ENCODE measurements at regions of chr2 and their contacts with region 1.

Region 1: GRCh38 chr2:237122214-237122666 is 36.6 kb downstream of the COPS8 start:
- DNase-seq: peak; percentile 47 to 65
- ATAC-seq: peak; percentile 56 to 86 (median 74)
- H3K4me3 ChIP-seq: no peak overlapping the region
- H3K27ac ChIP-seq: no peak overlapping the region
- H3K4me1 ChIP-seq: peaks cover 0 to 17% (median 0%) of the 10 kb centered on the region in 9 donors
- H3K27me3 ChIP-seq: no peaks in the 10 kb centered on the region
- CTCF ChIP-seq: peak; percentile 46 to 76 (median 71)

Region 2: GRCh38 chr2:237563816-237564215 is 441.6 kb after region 1 on chr2:
- intact Hi-C with region 1: loop called in 1 of 10 experiments (anchors 10 kb)
- DNase-seq: no peak
- ATAC-seq: no peak
- H3K4me3 ChIP-seq: no peak overlapping the region
- H3K27ac ChIP-seq: no peak overlapping the region
- H3K4me1 ChIP-seq: peaks cover 0 to 9% (median 7%) of the 10 kb centered on the region in 9 donors
- H3K27me3 ChIP-seq: peaks cover 0 to 23% (median 6%) of the 10 kb centered on the region in 7 donors
- CTCF ChIP-seq: no peak

Measured in heart right ventricle (tissue), 16 donors.